ENCODE measurements at regions of chr6 and their contacts with region 1.

Region 1: DNA sequence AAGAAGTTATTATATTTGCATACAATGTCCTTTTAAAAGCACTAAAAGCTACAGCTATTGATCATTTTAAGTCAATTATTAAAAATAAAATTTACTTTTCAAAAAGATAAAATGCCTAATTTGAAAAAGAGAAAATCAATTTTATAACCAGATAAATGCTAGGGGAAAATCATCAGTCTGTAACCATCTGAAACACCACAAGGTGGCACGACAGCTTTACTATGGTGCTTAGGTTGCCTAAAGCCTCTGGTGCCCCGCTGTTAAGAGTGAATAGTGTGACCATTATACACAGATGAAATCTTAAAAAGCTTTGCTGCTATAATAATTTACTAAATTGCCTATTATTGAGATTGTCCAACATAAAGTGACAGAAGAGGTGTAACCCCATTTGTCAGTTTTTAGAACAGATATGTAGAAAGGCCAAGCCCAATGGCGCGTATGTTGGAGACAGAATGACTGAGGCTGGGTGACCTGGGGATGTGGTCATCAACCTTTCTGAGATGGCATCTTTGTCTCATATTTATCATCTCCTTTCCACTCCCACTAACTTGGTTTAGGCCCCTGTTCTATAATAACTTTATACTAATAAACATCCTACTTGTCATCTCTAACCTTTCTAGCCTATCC is 100.8 kb downstream of the MOXD1 start:
- DNase-seq: peak; percentile 82
- H3K4me3 ChIP-seq: no peak overlapping the region
- H3K27ac ChIP-seq: no peak overlapping the region
- H3K4me1 ChIP-seq: peaks cover 35% of the 10 kb centered on the region
- CTCF ChIP-seq: peak; percentile 97

Region 2: DNA sequence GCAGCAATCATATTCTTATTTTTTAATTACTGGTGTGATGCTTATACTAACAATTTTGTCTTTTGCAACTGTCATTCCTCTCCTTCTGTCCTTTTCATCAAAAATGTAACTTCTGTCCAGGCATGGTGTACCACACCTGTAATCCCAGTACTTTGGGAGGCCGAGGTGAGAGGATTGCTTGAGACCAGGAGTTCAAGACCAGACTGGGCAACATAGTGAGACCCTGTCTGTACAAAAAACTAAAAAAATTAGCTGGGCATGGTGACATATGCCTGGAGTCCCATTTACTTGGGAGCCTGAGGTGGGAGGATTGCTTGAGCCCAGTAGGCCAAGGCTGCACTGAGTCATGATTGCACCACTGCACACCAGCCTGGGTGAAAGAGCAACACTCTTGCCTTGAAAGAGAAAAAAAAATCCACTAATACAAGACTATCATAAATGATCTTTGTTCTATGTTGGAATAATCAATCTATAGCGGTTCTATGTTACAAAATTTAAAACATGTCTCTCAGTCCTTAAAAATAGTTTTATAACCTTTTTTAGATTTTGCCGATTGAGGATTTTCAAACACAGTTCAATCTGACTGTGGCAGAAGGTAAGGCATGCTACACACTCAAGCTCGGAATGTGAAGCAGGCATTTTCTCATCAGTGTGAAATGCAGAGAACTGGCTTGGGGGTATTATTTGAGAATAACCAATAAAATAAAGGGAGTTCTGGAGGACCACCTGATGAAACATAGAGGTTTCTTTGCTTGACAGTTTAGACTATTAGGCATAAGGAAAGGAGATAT is 422.2 kb before region 1 on chr6:
- CTCF ChIA-PET with region 1: no interaction called
- POLR2A ChIA-PET with region 1: no interaction called
- intact Hi-C with region 1: no loop called
- DNase-seq: no peak
- H3K4me3 ChIP-seq: no peak overlapping the region
- H3K27ac ChIP-seq: no peak overlapping the region
- H3K4me1 ChIP-seq: no peaks in the 10 kb centered on the region
- CTCF ChIP-seq: no peak

Region 3: DNA sequence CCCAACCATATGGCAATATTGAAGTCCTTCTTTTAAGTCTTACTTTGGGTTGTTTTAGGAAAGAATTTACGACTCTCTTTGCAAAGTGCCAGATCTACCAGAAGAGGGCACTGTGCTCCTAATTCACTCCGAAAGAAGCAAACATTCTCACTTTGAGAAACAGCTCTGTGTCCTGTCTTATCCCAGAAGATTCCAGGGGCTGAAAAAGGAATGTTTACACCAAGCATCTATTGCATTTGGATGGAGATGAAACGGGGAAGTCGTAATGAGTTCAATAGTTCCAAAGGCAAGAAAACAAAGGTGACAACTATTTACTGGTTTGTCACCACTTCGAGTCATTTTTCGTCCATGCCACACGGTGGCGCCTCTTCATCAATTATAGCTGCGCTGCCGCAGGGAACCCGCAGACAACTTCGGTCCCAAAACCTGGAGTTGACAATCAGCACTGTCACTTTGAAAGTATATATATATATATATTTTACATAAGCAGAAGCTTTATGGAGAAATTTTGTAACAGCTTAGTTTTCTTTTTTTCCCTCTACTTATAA is 20.8 kb before region 1 on chr6:
- CTCF ChIA-PET with region 1: interaction called, 21 read pairs
- POLR2A ChIA-PET with region 1: interaction called, 22 read pairs
- intact Hi-C with region 1: loop called (anchors 1 kb)
- DNase-seq: peak; percentile 88
- H3K4me3 ChIP-seq: peak overlapping the region; percentile 63
- H3K27ac ChIP-seq: peak overlapping the region; percentile 22
- H3K4me1 ChIP-seq: peaks cover 20% of the 10 kb centered on the region
- CTCF ChIP-seq: peak; percentile 100

Region 4: GRCh38 chr6:132391391-132392271 is 91.2 kb after region 1 on chr6:
- CTCF ChIA-PET with region 1: interaction called, 4 read pairs
- POLR2A ChIA-PET with region 1: interaction called, 12 read pairs
- intact Hi-C with region 1: loop called (anchors 1 kb)
- DNase-seq: no peak
- H3K4me3 ChIP-seq: no peak overlapping the region
- H3K27ac ChIP-seq: no peak overlapping the region
- H3K4me1 ChIP-seq: peaks cover 24% of the 10 kb centered on the region
- CTCF ChIP-seq: no peak

Region 5: DNA sequence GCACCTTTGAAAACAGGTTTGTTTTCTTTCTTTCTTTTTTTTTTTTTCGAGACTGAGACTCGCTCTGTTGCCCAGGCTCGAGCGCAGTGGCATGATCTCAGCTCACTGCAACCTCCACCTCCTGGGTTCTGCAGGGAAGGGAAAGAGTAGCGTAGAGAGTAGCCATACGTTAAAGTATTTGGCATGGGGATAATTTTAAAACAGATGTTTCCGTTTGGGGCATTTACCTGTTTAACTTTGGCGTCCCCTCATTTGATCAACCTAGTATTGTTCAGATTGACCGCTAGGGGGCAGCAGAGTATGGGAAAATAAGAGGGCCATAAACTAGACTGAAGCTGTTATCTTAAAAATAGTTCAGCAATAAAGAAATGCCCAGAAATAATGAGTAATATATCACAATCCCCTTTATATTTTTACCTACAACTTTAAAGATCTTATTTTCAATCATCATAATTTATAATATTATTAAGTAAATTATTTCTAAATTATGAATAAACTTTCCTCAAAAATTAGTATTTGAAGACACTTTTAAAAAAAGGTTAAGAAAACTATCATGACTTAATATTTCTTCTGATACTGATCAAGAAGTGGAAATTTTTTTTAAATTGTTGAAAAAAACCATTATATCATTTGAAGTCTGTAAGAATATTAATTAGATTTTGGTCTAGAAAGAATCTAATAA is 230.0 kb after region 1 on chr6:
- CTCF ChIA-PET with region 1: no interaction called
- POLR2A ChIA-PET with region 1: no interaction called
- intact Hi-C with region 1: loop called (anchors 1 kb)
- DNase-seq: peak; percentile 82
- H3K4me3 ChIP-seq: peak overlapping the region; percentile 63
- H3K27ac ChIP-seq: no peak overlapping the region
- H3K4me1 ChIP-seq: peaks cover 7% of the 10 kb centered on the region
- CTCF ChIP-seq: peak; percentile 87

Region 6: GRCh38 chr6:132768051-132768517 is 467.6 kb after region 1 on chr6:
- CTCF ChIA-PET with region 1: no interaction called
- POLR2A ChIA-PET with region 1: no interaction called
- intact Hi-C with region 1: loop called (anchors 5 kb)
- DNase-seq: peak; percentile 59
- H3K4me3 ChIP-seq: peak overlapping the region; percentile 26
- H3K27ac ChIP-seq: no peak overlapping the region
- H3K4me1 ChIP-seq: peaks cover 8% of the 10 kb centered on the region
- CTCF ChIP-seq: peak; percentile 88